Sigmoid colon (tissue), 7 donors: ENCODE measurements at regions of chr19 and their contacts with region 1.

Region 1: GRCh38 chr19:15091901-15092753 is 10.1 kb downstream of the OR1I1 start:
- DNase-seq: peak; percentile 66
- H3K4me3 ChIP-seq: peak overlapping the region in 1 of 4 donors; percentile 32
- H3K27ac ChIP-seq: peak overlapping the region in 2 of 4 donors; percentile 20 to 24
- H3K4me1 ChIP-seq: peaks cover 0 to 8% (median 3%) of the 10 kb centered on the region in 4 donors
- H3K27me3 ChIP-seq: peaks cover 0 to 11% (median 4%) of the 10 kb centered on the region in 3 donors
- CTCF ChIP-seq: peak; percentile 18 to 42 (median 41)
- EP300 ChIP-seq: no peak
- POLR2A ChIP-seq: no peak

Region 2: DNA sequence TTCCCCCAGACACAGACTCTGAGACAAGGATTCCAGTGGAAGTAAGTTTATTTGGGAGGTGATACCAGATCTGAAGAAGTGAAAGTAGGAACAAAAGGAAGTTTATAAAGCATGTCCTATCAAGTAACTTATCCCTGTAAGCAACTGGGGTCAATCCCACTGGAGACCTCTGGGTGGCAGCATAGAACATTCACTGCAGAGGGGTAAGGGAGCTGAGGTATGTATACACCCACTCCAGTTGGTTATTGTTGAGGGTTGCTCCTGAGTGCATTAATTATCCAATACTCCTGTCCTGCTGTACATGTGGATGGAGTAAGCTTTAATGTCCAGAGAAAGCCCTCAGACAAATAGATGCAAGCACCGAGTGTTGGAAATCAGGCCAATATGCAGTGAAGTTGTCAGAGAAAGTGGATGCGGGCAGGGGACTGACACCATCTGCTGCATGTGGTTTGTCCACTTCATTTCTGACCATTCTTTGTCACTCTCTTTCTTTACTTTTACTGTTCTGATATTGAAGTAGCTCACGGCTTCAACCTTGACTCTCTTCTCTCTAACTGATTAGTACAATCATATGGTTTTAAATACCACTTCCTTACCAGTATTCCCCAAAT is 62.0 kb after region 1 on chr19:
- intact Hi-C with region 1: loop called (anchors 1 kb)
- DNase-seq: peak; percentile 17
- H3K4me3 ChIP-seq: no peak overlapping the region
- H3K27ac ChIP-seq: no peak overlapping the region
- H3K4me1 ChIP-seq: peaks cover 0 to 3% (median 0%) of the 10 kb centered on the region in 4 donors
- H3K27me3 ChIP-seq: no peaks in the 10 kb centered on the region
- CTCF ChIP-seq: peak in 1 of 4 experiments; percentile 29
- EP300 ChIP-seq: no peak
- POLR2A ChIP-seq: no peak

Region 3: GRCh38 chr19:15280915-15281683 is 189.0 kb after region 1 on chr19:
- intact Hi-C with region 1: no loop called
- DNase-seq: peak; percentile 94
- H3K4me3 ChIP-seq: no peak overlapping the region
- H3K27ac ChIP-seq: peak overlapping the region; percentile 47 to 78 (median 76)
- H3K4me1 ChIP-seq: peaks cover 0 to 100% (median 99%) of the 10 kb centered on the region in 4 donors
- H3K27me3 ChIP-seq: no peaks in the 10 kb centered on the region
- CTCF ChIP-seq: no peak
- EP300 ChIP-seq: no peak
- POLR2A ChIP-seq: no peak

Region 4: DNA sequence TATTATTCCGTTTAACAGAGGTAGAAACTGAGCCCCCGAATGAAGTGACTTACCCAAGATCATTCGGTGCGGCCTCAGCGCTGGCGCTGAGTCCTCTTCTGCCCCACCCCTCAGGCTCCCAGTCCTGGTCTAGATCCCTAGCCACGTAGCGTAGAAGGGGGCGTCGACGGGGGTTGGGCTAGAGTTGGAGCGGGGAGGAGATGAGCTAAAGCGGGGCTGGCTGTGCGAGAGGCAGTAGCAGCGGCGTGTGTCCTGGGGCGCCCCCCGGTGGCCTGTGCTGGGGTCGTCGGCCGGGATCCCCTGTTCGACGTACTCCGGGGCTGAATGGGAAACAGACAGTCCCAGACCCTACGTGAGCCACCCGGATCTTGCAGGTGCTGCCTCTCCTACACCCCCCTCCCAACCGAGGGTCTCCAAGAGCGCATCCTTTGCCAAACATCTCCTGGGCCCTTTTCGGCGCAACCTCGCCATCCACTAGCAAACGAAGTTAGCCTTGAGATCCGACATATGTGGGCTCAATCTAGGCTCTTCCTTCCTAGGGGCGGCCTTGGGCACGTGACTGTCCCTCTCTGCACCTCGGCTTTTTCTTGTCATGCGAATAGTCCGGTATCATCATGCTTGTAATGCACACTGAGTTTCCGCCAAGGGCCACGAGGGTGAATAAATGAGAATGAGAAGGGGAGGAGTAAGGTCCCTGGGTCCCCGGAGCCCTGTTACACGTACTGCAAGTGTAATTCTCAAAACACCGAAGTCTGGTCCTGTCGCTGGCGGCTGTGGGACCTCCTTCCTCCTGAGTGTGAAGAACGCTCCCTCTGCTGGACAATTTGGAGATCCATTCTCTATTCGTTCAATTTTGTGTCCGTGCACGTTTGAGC is 463.9 kb after region 1 on chr19:
- intact Hi-C with region 1: loop called (anchors 2 kb)
- DNase-seq: peak; percentile 93
- H3K4me3 ChIP-seq: peak overlapping the region in 2 of 4 donors; percentile 31 to 40
- H3K27ac ChIP-seq: peak overlapping the region in 3 of 4 donors; percentile 35 to 69 (median 41)
- H3K4me1 ChIP-seq: peaks cover 0 to 20% (median 18%) of the 10 kb centered on the region in 4 donors
- H3K27me3 ChIP-seq: peaks cover 4 to 37% (median 16%) of the 10 kb centered on the region in 3 donors
- CTCF ChIP-seq: peak; percentile 73 to 84 (median 80)
- EP300 ChIP-seq: no peak
- POLR2A ChIP-seq: no peak